GM10248 (cell line): ENCODE measurements at regions of chr1 and their contacts with region 1.

Region 1: DNA sequence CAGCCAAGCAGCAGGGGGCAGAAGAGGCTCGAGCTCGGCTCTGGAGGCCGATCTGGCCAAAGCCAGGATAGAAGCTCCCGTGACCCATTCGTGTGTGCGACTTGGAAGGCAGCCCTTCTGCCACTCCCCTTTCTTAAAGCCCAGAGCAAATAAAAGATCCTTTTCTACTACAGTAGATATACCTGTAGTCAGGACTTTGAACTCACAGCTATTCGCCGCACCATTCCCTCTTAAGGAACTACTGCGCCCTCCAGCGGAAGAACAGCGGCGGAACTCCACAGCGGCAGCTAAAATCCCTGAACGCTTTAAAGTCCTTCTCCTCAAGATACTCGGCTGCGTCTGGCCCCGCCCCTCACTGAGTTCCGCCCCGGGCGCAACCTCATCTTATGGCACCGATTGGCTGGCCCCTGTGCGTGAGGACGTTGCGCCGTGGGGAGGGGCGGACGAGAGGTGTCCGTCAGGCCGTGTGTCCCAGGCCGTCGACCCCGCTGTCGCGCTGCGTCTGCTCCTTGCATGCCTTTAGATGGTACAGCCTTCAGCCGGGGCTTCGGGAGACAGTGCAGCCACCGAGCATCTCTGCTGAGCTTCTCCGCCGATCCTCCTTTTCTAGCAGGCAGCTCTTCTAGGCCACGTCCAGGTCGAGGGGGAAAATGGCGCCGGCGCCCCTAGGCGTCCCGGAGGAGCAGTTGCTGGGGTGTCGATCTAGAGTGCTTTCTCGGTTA is at the start of gene LRIG2:
- DNase-seq: peak; percentile 95
- CTCF ChIP-seq: peak; percentile 94

Region 2: GRCh38 chr1:112809253-112809684 is 263.6 kb before region 1 on chr1:
- CTCF ChIA-PET with region 1: interaction called, 12 read pairs
- POLR2A ChIA-PET with region 1: no interaction called
- DNase-seq: peak; percentile 81
- CTCF ChIP-seq: peak; percentile 93

Region 3: GRCh38 chr1:112937070-112937469 is 135.8 kb before region 1 on chr1:
- CTCF ChIA-PET with region 1: interaction called, 13 read pairs
- POLR2A ChIA-PET with region 1: no interaction called
- DNase-seq: peak; percentile 34
- CTCF ChIP-seq: no peak

Region 4: DNA sequence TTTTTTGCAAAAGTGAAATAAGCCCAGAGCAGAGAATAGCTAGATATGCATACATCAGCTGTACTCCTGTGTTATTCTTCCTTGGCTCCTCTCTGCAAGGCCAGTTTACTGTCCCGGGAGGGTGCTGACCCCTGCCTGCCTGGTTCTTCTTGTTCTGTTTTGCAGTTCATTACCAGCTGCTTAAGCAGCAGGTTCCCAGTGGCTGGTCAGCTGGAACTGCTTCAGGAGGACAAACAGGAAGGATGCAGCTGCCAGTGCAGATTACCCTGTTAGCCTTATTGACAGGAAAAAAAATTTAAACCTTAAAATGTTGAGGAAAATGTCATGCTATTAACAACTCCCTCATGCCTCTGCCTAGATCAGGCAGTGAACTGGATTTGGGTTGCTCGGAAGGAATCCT is 15.9 kb before region 1 on chr1:
- CTCF ChIA-PET with region 1: interaction called, 118 read pairs
- POLR2A ChIA-PET with region 1: interaction called, 5 read pairs
- DNase-seq: no peak
- CTCF ChIP-seq: no peak

Region 5: DNA sequence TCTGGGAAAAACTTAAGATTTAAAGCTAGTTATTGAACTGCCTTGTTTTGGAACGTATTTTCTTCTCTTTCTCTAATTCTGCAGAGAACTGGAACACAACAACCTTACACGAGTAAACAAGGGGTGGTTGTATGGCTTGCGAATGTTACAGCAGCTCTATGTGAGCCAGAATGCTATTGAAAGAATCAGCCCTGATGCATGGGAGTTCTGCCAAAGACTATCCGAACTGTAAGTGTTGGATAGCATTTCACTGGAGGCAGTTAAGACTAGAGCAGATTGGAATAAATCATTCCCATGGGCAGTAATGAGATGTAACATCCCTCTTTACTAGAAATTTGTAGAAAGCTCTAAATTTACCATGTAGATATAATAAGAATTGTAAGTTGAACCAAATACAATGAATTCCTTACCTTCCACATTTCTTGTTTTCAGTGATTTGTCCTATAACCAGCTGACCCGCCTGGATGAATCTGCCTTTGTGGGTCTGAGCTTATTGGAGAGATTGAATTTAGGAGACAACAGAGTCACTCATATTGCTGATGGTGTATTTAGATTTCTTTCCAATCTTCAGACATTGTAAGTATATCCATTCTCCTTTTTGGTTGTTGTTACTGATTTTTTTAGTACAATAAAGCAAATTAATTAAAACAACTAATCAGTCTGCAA is 23.0 kb after region 1 on chr1:
- CTCF ChIA-PET with region 1: interaction called, 26 read pairs
- POLR2A ChIA-PET with region 1: no interaction called
- DNase-seq: no peak
- CTCF ChIP-seq: no peak

Region 6: DNA sequence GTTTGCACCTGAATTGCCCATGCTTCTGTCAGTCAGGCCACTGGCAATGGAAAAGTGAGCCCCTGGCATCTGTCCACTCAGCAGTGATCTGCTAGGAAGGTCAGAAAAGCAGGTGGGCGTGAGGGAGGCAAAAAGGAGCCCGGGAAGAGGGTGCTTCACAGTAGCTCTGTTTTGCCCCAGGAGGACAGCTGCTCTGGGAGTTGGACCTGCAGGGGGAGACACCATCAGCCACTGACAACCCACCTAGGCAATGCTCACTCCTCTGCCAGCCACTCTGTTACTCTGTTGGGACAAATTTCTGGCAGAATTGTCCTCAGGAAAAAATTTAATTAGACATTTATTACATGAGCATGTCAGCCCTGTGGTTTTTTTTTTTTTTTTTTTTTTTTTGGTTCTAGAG is 146.5 kb after region 1 on chr1:
- CTCF ChIA-PET with region 1: no interaction called
- POLR2A ChIA-PET with region 1: no interaction called
- DNase-seq: no peak
- CTCF ChIP-seq: no peak